Psoas muscle (tissue), 8 donors: ENCODE measurements at regions of chr4 and their contacts with region 1.

Region 1: GRCh38 chr4:64158648-64159326 is 250.5 kb downstream of the TECRL start:
- DNase-seq: no peak
- ATAC-seq: peak in 1 of 4 donors; percentile 61
- H3K4me3 ChIP-seq: peak overlapping the region; percentile 41
- H3K27ac ChIP-seq: no peak overlapping the region
- H3K4me1 ChIP-seq: no peaks in the 10 kb centered on the region
- H3K27me3 ChIP-seq: no peaks in the 10 kb centered on the region
- CTCF ChIP-seq: peak; percentile 77

Region 2: GRCh38 chr4:64539234-64539849 is 380.6 kb after region 1 on chr4:
- intact Hi-C with region 1: loop called (anchors 2 to 5 kb)
- DNase-seq: no peak
- ATAC-seq: peak; percentile 65 to 89 (median 72)
- H3K4me3 ChIP-seq: no peak overlapping the region
- H3K27ac ChIP-seq: no peak overlapping the region
- H3K4me1 ChIP-seq: no peaks in the 10 kb centered on the region
- H3K27me3 ChIP-seq: no peaks in the 10 kb centered on the region
- CTCF ChIP-seq: peak; percentile 73